Naive thymus-derived CD4-positive, alpha-beta T cell (primary cell): ENCODE measurements at regions of chr16 and their contacts with region 1.

Region 1: GRCh38 chr16:10256784-10257641 is 74.8 kb upstream of the GRIN2A start:
- DNase-seq: peak; percentile 10 to 52 (median 30)
- ATAC-seq: peak; percentile 74
- H3K4me3 ChIP-seq: no peak overlapping the region
- H3K4me3 Mint-ChIP-seq: peak overlapping the region in 1 of 10 donors; percentile 29
- H3K27ac ChIP-seq: no peak overlapping the region
- H3K27ac Mint-ChIP-seq: peak overlapping the region in 2 of 9 donors; percentile 55 to 56
- H3K4me1 ChIP-seq: no peaks in the 10 kb centered on the region
- H3K4me1 Mint-ChIP-seq: peaks cover 0 to 5% (median 3%) of the 10 kb centered on the region in 7 donors
- H3K27me3 ChIP-seq: no peaks in the 10 kb centered on the region
- H3K27me3 Mint-ChIP-seq: peaks cover 1 to 11% (median 7%) of the 10 kb centered on the region in 5 donors

Region 2: DNA sequence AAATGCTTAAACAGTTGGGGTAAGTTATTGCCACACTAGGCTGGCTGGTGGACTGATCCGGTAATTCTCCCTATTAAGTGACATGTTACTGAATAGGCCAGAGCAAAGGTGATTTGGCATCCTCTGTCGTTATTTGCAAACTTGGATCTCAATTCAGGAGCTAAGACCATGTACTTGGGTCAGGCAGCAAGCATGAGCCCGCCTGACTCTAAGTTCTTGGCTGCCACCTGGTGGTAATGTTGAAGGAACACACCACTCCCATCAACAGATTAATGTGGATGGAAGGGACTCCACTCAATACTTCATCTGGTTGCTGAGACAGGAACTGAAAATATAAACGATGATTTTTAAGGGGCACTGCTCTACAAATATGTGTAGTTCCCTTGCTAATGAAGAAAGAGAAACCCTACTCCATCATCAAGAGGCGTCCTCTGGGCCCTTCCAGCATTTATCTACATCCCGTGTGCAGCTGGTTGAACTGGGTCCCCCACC is 252.6 kb after region 1 on chr16:
- CTCF ChIA-PET with region 1: interaction called, 4 read pairs
- POLR2A ChIA-PET with region 1: no interaction called
- intact Hi-C with region 1: loop called in 1 of 2 experiments (anchors 1 kb)
- DNase-seq: peak; percentile 18 to 78 (median 65)
- ATAC-seq: peak; percentile 90
- H3K4me3 ChIP-seq: no peak overlapping the region
- H3K4me3 Mint-ChIP-seq: no peak overlapping the region
- H3K27ac ChIP-seq: no peak overlapping the region
- H3K27ac Mint-ChIP-seq: peak overlapping the region in 5 of 9 donors; percentile 6 to 69 (median 53)
- H3K4me1 ChIP-seq: no peaks in the 10 kb centered on the region
- H3K4me1 Mint-ChIP-seq: peaks cover 2 to 10% (median 4%) of the 10 kb centered on the region in 7 donors
- H3K27me3 ChIP-seq: no peaks in the 10 kb centered on the region
- H3K27me3 Mint-ChIP-seq: peaks cover 0 to 8% (median 0%) of the 10 kb centered on the region in 5 donors